Activated CD4-positive, alpha-beta memory T cell treated with anti-CD3 and anti-CD28 coated beads for 36 hours (primary cell): ENCODE measurements at regions of chr5 and their contacts with region 1.

Region 1: GRCh38 chr5:151270599-151270998 is 17.6 kb downstream of the GM2A start:
- DNase-seq: no peak
- H3K4me3 Mint-ChIP-seq: no peak overlapping the region
- H3K27ac Mint-ChIP-seq: no peak overlapping the region
- H3K4me1 Mint-ChIP-seq: no peaks in the 10 kb centered on the region
- H3K27me3 Mint-ChIP-seq: no peaks in the 10 kb centered on the region

Region 2: GRCh38 chr5:151202381-151203139 is 68.0 kb before region 1 on chr5:
- CTCF ChIA-PET with region 1: no interaction called
- POLR2A ChIA-PET with region 1: no interaction called
- intact Hi-C with region 1: loop called (anchors 2 kb)
- DNase-seq: peak; percentile 76
- H3K4me3 Mint-ChIP-seq: no peak overlapping the region
- H3K27ac Mint-ChIP-seq: peak overlapping the region; percentile 83
- H3K4me1 Mint-ChIP-seq: peaks cover 29% of the 10 kb centered on the region
- H3K27me3 Mint-ChIP-seq: no peaks in the 10 kb centered on the region

Region 3: DNA sequence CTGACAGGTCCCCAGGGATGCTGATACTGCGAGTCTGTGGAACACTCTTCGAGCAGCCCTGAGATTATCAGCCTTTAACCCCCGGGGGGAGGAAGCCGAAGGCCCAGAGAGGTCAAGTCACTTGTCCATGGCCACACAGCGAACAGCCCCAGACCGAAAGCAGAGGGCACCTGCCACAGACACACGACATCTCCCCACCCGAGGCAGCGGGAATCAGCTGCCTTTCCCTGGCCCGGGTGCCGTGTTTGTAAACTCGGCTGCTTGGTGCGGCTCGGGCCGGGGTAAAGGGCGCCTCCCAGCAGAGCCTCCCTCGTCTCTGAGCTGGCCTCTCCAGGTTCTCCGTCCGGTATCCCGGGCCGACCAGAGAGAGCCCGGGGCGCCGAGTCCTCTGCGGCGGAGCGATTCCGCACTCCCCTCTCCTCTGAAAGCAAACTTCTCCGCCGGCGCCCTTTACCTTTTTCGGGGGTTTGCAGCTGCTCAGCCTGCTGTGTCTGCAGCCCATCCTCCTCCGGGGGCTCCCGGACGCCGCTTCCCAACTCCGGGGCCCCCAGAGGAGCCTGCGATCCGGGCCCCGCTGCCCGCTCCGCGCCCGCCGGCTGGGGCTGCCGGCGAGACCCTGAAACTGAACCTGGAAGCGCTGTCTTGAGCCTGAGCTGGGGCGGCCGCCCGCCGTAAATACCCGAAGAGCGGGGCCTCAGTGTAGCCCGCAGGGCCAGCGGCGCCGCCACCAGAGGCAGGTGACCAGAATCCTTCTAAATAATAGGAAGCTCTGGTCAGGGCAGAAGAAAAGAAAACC is 46.9 kb before region 1 on chr5 and contains the start of gene CCDC69:
- CTCF ChIA-PET with region 1: no interaction called
- POLR2A ChIA-PET with region 1: no interaction called
- intact Hi-C with region 1: no loop called
- DNase-seq: peak; percentile 70
- H3K4me3 Mint-ChIP-seq: peak within 1 kb of the TSS; percentile 89
- H3K27ac Mint-ChIP-seq: peak within 1 kb of the TSS; percentile 86
- H3K4me1 Mint-ChIP-seq: peaks cover 51% of the 10 kb centered on the region
- H3K27me3 Mint-ChIP-seq: no peaks in the 10 kb centered on the region
- total RNA-seq, gene CCDC69: 24.6 to 27.6 TPM